ENCODE measurements at regions of chr7 and their contacts with region 1.

Region 1: GRCh38 chr7:73567846-73568685 is 10.3 kb downstream of the TBL2 start:
- H3K4me3 Mint-ChIP-seq: no peak overlapping the region
- H3K27ac Mint-ChIP-seq: no peak overlapping the region
- H3K4me1 Mint-ChIP-seq: peaks cover 18% of the 10 kb centered on the region
- H3K27me3 Mint-ChIP-seq: no peaks in the 10 kb centered on the region

Region 2: DNA sequence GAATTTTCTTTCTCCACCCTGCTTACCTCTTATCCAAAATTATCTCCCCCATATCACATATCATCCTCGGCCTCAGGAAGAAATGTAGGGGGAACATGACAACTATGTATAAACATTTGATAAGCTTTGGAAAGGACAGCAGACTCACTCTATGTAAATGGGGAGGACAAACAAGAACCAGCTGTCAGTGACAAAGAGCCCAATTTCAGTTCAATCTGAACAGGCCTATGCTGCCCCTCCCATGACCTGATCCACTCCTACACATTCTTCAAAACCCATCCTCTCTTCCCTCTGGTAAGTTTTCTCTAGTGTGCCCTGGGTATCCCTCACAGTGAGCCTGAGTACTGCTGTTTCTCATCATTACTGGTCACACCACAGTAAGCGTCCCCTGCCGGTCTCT is 113.6 kb before region 1 on chr7:
- intact Hi-C with region 1: no loop called
- H3K4me3 Mint-ChIP-seq: no peak overlapping the region
- H3K27ac Mint-ChIP-seq: peak overlapping the region; percentile 40
- H3K4me1 Mint-ChIP-seq: peaks cover 8% of the 10 kb centered on the region
- H3K27me3 Mint-ChIP-seq: no peaks in the 10 kb centered on the region

Region 3: GRCh38 chr7:73547841-73548240 is 20.2 kb before region 1 on chr7:
- intact Hi-C with region 1: loop called (anchors 2 kb)
- H3K4me3 Mint-ChIP-seq: no peak overlapping the region
- H3K27ac Mint-ChIP-seq: no peak overlapping the region
- H3K4me1 Mint-ChIP-seq: peaks cover 26% of the 10 kb centered on the region
- H3K27me3 Mint-ChIP-seq: no peaks in the 10 kb centered on the region

Region 4: GRCh38 chr7:73682745-73683055 is 114.6 kb after region 1 on chr7:
- intact Hi-C with region 1: no loop called
- H3K4me3 Mint-ChIP-seq: peak overlapping the region; percentile 94
- H3K27ac Mint-ChIP-seq: peak overlapping the region; percentile 95
- H3K4me1 Mint-ChIP-seq: peaks cover 36% of the 10 kb centered on the region
- H3K27me3 Mint-ChIP-seq: no peaks in the 10 kb centered on the region

Measured in dendritic cell treated with granulocyte-macrophage colony-stimulating factor and Interleukin-4, amounts not matched to agents 40 ng/mL and 50 ng/mL, for 4 days (primary cell).